ENCODE measurements at regions of chr10 and their contacts with region 1.

Region 1: GRCh38 chr10:77592946-77593636 is 44.5 kb downstream of the KCNMA1 start:
- DNase-seq: peak; percentile 70
- H3K4me3 ChIP-seq: no peak overlapping the region
- H3K27ac ChIP-seq: peak overlapping the region; percentile 86 to 90 (median 87)
- H3K4me1 ChIP-seq: peaks cover 0 to 83% (median 62%) of the 10 kb centered on the region in 4 donors
- H3K27me3 ChIP-seq: no peaks in the 10 kb centered on the region
- CTCF ChIP-seq: no peak
- EP300 ChIP-seq: no peak
- POLR2A ChIP-seq: no peak

Region 2: DNA sequence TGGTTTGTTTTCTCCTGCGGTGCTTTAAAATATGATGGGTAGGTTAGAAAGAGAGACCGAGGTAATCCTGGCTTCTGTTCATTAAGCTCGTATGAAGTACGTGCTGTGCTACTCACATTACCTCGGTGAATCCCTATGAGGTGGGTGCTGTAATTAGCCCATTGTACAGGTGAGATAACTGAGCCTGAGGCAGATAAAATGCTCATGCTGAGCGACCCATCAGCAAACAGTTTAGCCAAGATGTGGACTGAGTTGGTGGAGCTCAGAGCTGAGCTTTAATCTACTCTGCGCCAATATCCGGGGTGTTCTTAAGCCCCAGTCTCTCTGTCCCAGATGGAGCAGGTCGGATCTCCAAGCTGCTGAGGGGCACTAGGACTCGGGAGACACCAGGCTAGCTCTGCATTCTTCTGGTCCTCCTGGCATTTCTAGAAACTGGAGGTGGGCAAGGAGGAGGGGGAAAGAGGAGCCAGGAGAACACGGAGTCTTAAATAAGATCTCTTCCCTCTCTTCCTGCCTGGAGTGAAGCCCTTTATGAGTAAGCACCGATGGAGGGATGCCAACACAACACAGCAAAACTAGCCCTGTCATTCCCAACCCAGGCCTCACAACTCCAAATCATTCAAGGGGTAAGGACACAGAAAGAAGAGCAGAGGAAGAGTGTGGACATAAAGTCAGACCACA is 413.9 kb before region 1 on chr10:
- intact Hi-C with region 1: loop called (anchors 5 kb)
- DNase-seq: peak; percentile 87
- H3K4me3 ChIP-seq: no peak overlapping the region
- H3K27ac ChIP-seq: peak overlapping the region; percentile 55 to 84 (median 72)
- H3K4me1 ChIP-seq: peaks cover 0 to 68% (median 56%) of the 10 kb centered on the region in 4 donors
- H3K27me3 ChIP-seq: no peaks in the 10 kb centered on the region
- CTCF ChIP-seq: no peak
- EP300 ChIP-seq: no peak
- POLR2A ChIP-seq: no peak

Measured in sigmoid colon (tissue), 7 donors.